ENCODE measurements at regions of chr10 and their contacts with region 1.

Region 1: GRCh38 chr10:58064714-58065528 is 202.8 kb downstream of the IPMK start:
- DNase-seq: no peak
- H3K4me3 ChIP-seq: no peak overlapping the region
- CTCF ChIP-seq: peak; percentile 60

Region 2: DNA sequence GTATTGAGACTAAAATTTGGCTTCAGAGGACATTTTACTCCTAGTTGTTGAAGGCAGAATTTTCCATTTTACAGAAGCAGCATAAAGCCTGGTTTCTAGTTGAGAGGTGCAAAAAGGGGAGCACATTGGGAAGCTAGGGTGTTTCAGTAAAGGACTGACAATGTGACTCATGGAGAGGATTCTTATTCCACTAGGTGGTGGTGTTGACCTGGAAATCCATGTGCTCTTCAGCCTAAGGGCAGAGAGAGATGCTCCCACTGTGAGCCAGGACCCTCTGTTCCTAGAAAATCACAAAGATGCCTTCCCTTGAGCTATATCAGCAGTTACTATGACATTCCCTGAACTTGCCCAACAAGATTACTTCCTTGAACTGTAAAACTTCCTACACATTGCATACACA is 485.0 kb before region 1 on chr10:
- CTCF ChIA-PET with region 1: interaction called, 30 read pairs
- POLR2A ChIA-PET with region 1: no interaction called
- DNase-seq: no peak
- H3K4me3 ChIP-seq: no peak overlapping the region
- CTCF ChIP-seq: no peak

Region 3: GRCh38 chr10:57716886-57717285 is 348.0 kb before region 1 on chr10:
- CTCF ChIA-PET with region 1: interaction called, 31 read pairs
- POLR2A ChIA-PET with region 1: no interaction called
- DNase-seq: no peak
- H3K4me3 ChIP-seq: no peak overlapping the region
- CTCF ChIP-seq: peak; percentile 28